Activated CD4-positive, alpha-beta memory T cell treated with anti-CD3 and anti-CD28 coated beads for 36 hours (primary cell): ENCODE measurements at regions of chr1 and their contacts with region 1.

Region 1: DNA sequence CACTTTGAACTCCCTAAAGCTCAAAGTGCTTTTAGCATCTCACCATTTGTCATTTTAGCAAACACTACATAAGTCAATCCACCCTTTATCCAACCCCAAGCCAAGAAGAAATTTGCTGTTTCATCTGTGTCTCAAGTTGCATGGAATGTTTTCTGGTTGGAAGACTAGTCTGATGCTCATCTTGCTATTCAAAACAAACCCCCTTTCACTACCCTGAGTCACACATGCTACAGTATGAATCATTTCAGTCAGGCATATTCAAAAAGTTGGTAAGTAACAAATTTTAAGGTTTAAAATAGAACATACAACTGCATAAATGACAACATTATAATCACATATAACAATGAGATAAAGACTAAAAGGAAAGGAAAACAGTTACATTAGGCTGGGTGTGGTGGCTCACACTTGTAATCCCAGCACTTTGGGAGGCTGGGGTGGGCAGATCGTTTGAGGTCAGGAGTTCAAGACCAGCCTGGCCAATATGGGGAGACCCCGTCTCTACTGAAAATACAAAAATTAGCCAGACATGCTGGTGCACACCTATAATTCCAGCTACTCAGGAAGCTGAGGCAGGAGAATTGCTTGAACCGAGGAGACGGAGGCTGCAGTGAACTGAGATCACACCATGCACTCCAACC is 38.7 kb downstream of the DSTYK start:
- DNase-seq: peak; percentile 31
- H3K4me3 Mint-ChIP-seq: no peak overlapping the region
- H3K27ac Mint-ChIP-seq: peak overlapping the region; percentile 64
- H3K4me1 Mint-ChIP-seq: peaks cover 24% of the 10 kb centered on the region
- H3K27me3 Mint-ChIP-seq: no peaks in the 10 kb centered on the region

Region 2: GRCh38 chr1:205211169-205211838 is 38.5 kb after region 1 on chr1 and contains the start of gene DSTYK:
- CTCF ChIA-PET with region 1: no interaction called
- POLR2A ChIA-PET with region 1: no interaction called
- intact Hi-C with region 1: loop called (anchors 5 kb)
- DNase-seq: peak; percentile 96
- H3K4me3 Mint-ChIP-seq: peak within 1 kb of the TSS; percentile 92
- H3K27ac Mint-ChIP-seq: peak within 1 kb of the TSS; percentile 91
- H3K4me1 Mint-ChIP-seq: peaks cover 48% of the 10 kb centered on the region
- H3K27me3 Mint-ChIP-seq: no peaks in the 10 kb centered on the region
- total RNA-seq, gene DSTYK: 9.0 to 9.8 TPM

Region 3: DNA sequence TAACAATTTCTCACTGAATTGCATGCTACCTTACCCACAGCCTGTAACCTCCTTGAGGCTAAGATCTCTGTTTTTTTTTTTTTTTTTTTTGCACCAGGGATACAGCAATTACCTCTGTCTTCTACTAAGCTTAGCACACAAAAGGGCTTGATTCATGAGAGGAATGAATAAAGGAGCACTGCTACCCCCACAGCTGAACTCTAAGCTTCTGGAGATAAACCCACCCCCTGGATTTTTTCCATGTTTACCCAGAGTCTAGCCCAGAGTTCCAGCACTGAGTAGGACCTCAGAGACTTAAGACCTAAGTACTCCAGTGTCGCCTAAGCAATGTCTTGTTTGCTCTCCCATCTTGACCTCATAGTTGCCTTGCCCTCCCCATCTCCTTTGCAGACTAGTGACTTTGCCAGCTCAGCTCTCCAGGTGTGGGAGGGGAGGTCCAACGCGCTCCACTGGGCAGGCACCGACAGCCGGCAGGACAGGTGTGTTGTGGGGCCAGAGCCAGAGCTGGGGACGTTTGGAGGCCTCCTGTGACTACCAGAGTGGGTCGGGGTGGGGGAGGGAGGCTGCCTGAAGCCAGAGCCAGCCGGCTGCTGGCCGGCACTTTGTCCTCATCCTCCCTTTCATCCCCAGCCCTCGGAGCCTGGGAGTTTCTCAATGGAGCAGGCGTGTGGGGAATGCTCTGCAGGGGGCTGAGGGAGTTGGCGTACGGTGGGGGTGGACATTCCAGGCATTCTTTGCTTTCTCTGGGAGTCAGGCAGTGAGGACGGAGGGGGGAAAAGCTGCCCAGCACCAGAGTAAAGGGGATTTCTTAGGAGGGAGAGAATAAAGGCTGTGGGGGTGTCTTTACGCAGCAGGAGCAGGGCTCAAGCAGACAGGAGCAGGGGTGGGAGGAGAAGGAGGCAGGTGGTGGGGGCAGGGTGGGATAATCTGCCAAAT is 128.3 kb after region 1 on chr1:
- CTCF ChIA-PET with region 1: no interaction called
- POLR2A ChIA-PET with region 1: no interaction called
- intact Hi-C with region 1: no loop called
- DNase-seq: no peak
- H3K4me3 Mint-ChIP-seq: no peak overlapping the region
- H3K27ac Mint-ChIP-seq: no peak overlapping the region
- H3K4me1 Mint-ChIP-seq: peaks cover 33% of the 10 kb centered on the region
- H3K27me3 Mint-ChIP-seq: no peaks in the 10 kb centered on the region